ENCODE measurements at regions of chr13 and their contacts with region 1.

Region 1: DNA sequence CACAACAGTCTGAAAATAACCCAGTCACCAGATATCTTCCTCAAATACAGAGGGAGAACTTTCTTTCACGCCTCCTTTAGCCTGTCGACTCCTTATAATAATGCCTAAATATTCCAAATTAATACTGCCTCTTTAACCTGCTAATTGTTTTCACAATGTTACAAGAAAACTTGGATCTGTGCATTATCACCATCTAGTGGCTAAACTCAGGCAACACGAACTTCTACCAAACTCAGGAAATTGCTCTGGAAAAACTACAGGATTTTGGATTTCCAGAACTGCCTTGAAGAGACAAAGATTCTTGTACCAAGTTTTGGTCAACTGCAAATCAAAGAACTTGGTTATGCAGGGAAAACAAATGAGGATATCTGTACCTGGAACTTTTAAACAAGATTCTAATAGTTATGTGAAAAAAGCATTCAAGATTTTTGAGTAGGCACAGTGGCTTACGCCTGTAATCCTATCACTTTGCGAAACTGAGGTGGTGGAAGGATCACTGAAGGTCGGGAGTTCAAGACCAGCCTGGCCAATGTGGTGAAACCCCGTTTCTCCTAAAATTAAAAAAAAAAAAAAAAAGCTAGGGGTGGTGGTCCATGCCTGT is 10.8 kb downstream of the CLN5 start:
- DNase-seq: peak in 2 of 4 experiments; percentile 9 to 32
- ATAC-seq: peak; percentile 76
- H3K4me3 ChIP-seq: no peak overlapping the region
- H3K27ac ChIP-seq: no peak overlapping the region
- H3K4me1 ChIP-seq: no peaks in the 10 kb centered on the region
- H3K27me3 ChIP-seq: no peaks in the 10 kb centered on the region
- CTCF ChIP-seq: peak; percentile 19 to 56 (median 46); a peak in 4 of 6 replicates
- EP300 ChIP-seq: no peak
- POLR2A ChIP-seq: no peak
- RAD21 ChIP-seq: peak in 1 of 2 experiments; percentile 36; a peak in 2 of 4 replicates

Region 2: GRCh38 chr13:77477299-77477848 is 474.7 kb after region 1 on chr13:
- CTCF ChIA-PET with region 1: no interaction called
- POLR2A ChIA-PET with region 1: no interaction called
- in situ Hi-C with region 1: no loop called
- intact Hi-C with region 1: loop called (anchors 5 kb)
- DNase-seq: no peak
- ATAC-seq: no peak
- H3K4me3 ChIP-seq: no peak overlapping the region
- H3K27ac ChIP-seq: peak overlapping the region; percentile 77; the same call in 1 of the 3 replicates
- H3K4me1 ChIP-seq: peaks cover 0 to 5% of the 10 kb centered on the region in 2 experiments; a peak in 2 of 5 replicates
- H3K27me3 ChIP-seq: no peaks in the 10 kb centered on the region
- CTCF ChIP-seq: no peak
- EP300 ChIP-seq: no peak
- POLR2A ChIP-seq: no peak
- RAD21 ChIP-seq: no peak